Activated B cell treated with CpG ODN at 0.5 μM for 24 hours (primary cell): ENCODE measurements at regions of chr12 and their contacts with region 1.

Region 1: GRCh38 chr12:71746983-71747611 is 7.6 kb upstream of the RAB21 start:
- DNase-seq: peak; percentile 23
- ATAC-seq: peak; percentile 98
- H3K4me3 Mint-ChIP-seq: no peak overlapping the region
- H3K27ac Mint-ChIP-seq: no peak overlapping the region
- H3K4me1 Mint-ChIP-seq: peaks cover 3% of the 10 kb centered on the region
- H3K27me3 Mint-ChIP-seq: peaks cover 5% of the 10 kb centered on the region
- CTCF ChIP-seq: peak; percentile 91

Region 2: GRCh38 chr12:70443062-70443673 is 1303.9 kb before region 1 on chr12:
- CTCF ChIA-PET with region 1: no interaction called
- POLR2A ChIA-PET with region 1: no interaction called
- intact Hi-C with region 1: no loop called
- DNase-seq: no peak
- ATAC-seq: no peak
- H3K4me3 Mint-ChIP-seq: no peak overlapping the region
- H3K27ac Mint-ChIP-seq: no peak overlapping the region
- H3K4me1 Mint-ChIP-seq: no peaks in the 10 kb centered on the region
- H3K27me3 Mint-ChIP-seq: no peaks in the 10 kb centered on the region
- CTCF ChIP-seq: no peak

Region 3: DNA sequence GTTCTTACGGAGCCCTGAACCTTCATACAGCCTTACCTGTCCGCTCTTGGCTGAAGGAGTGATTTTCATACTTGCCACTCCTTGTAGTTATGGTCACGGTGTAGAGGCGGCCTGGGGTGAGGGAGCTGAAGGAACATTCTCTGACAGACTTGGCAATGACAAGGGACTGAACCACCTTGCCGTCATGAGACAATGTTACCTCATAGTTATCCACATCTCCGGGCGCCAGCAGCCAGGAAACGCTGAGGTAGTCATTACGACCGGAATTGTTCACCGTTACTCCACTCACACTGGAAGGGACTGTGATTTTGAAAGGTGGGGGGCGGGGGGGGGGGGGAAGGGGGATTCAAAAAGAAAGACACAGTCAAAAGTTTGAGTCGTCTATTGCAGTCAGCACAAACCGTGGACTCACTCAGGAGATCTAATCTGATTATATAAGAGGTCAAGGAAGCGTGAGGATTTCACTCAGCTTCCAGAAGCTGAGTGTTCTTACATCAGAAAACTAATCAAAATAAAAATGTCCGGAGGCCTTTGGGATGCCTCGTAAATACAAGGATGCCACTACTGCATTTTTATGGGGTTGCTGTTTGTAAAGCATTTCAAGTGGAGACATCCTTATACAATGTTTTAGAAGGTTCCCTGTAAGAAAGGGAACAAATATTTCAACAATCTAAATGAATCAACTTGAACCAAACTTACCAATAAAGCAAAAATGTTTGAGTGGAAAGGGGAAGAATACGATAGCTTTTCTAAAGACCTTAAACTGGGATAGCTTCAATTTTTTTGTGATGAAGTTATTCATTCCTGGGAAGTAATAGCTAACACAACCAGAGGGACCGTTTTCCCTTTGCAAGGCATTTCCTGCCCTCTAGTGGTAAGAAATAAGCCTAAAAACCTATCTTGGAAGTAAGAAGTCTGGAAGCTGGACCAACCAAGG is 1170.5 kb before region 1 on chr12:
- CTCF ChIA-PET with region 1: no interaction called
- POLR2A ChIA-PET with region 1: no interaction called
- intact Hi-C with region 1: loop called (anchors 10 kb)
- DNase-seq: no peak
- ATAC-seq: no peak
- H3K4me3 Mint-ChIP-seq: no peak overlapping the region
- H3K27ac Mint-ChIP-seq: no peak overlapping the region
- H3K4me1 Mint-ChIP-seq: no peaks in the 10 kb centered on the region
- H3K27me3 Mint-ChIP-seq: peaks cover 2% of the 10 kb centered on the region
- CTCF ChIP-seq: no peak

Region 4: DNA sequence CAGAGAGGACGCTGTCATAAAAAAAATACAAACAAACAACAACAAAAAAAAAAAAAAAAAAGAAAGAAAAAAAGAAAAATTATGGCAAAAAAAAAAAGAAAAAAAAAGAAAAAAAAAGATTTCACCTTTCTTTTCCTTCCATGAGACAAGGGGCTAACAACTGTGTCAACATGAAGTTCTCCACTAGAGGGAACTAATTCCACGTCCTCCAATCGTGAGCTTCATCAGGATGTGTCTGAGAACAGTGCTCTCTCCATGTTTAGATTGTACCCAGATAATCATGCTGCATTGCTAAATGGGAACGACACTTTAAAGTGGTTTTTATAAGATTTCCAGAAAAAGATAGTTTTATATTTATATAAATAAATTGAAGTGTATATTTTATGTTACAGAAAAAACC is 1013.7 kb before region 1 on chr12:
- CTCF ChIA-PET with region 1: interaction called, 5 read pairs
- POLR2A ChIA-PET with region 1: no interaction called
- intact Hi-C with region 1: loop called (anchors 2 kb)
- DNase-seq: no peak
- ATAC-seq: no peak
- H3K4me3 Mint-ChIP-seq: no peak overlapping the region
- H3K27ac Mint-ChIP-seq: no peak overlapping the region
- H3K4me1 Mint-ChIP-seq: no peaks in the 10 kb centered on the region
- H3K27me3 Mint-ChIP-seq: no peaks in the 10 kb centered on the region
- CTCF ChIP-seq: no peak

Region 5: GRCh38 chr12:71415336-71416231 is 331.5 kb before region 1 on chr12:
- CTCF ChIA-PET with region 1: interaction called, 62 read pairs
- POLR2A ChIA-PET with region 1: no interaction called
- intact Hi-C with region 1: loop called (anchors 1 kb)
- DNase-seq: no peak
- ATAC-seq: peak; percentile 54
- H3K4me3 Mint-ChIP-seq: no peak overlapping the region
- H3K27ac Mint-ChIP-seq: no peak overlapping the region
- H3K4me1 Mint-ChIP-seq: no peaks in the 10 kb centered on the region
- H3K27me3 Mint-ChIP-seq: no peaks in the 10 kb centered on the region
- CTCF ChIP-seq: no peak

Region 6: DNA sequence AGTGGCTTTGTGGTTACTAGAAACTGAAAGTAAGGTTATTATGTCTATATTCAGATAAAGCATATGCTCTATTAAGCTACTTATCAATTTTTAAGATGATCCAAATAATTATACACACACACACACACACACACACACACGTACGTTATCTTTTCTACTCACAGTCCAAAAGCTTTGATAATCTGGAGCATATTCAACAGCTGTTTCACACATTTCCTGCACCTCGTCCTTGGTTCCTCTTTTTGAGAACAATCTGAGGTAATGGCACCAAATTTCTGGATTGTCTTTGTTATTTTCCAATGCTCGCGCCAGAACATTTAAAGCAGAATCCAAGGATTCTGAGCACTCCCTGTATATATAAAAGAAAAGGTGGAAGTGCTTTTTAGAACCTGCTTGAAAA is 121.0 kb before region 1 on chr12:
- CTCF ChIA-PET with region 1: interaction called, 132 read pairs
- POLR2A ChIA-PET with region 1: interaction called, 6 read pairs
- intact Hi-C with region 1: no loop called
- DNase-seq: no peak
- ATAC-seq: peak; percentile 58
- H3K4me3 Mint-ChIP-seq: no peak overlapping the region
- H3K27ac Mint-ChIP-seq: peak overlapping the region; percentile 67
- H3K4me1 Mint-ChIP-seq: peaks cover 21% of the 10 kb centered on the region
- H3K27me3 Mint-ChIP-seq: no peaks in the 10 kb centered on the region
- CTCF ChIP-seq: no peak

Region 7: DNA sequence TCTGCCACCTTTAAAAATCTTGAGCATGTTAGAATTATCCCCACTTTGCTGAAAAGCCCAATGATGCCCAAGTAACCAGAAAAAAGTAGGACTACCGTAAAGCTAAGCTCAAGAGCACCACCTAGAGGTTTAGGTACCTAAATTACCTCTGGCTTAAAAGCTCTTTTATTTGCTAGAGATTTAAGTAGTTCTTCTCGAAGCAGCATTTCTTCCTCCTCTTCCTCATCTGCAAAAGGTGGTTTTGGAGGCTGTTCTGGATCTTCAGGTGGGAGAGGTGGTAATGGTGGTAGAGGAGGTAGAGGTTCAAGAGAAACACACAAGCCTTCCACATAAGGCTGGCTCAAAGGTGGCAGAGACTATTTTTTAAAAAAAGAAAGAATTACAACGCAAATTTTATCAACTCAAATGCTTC is 110.4 kb before region 1 on chr12:
- CTCF ChIA-PET with region 1: interaction called, 132 read pairs
- POLR2A ChIA-PET with region 1: interaction called, 3 read pairs
- intact Hi-C with region 1: loop called (anchors 1 kb)
- DNase-seq: no peak
- ATAC-seq: peak; percentile 57
- H3K4me3 Mint-ChIP-seq: no peak overlapping the region
- H3K27ac Mint-ChIP-seq: peak overlapping the region; percentile 19
- H3K4me1 Mint-ChIP-seq: peaks cover 5% of the 10 kb centered on the region
- H3K27me3 Mint-ChIP-seq: no peaks in the 10 kb centered on the region
- CTCF ChIP-seq: peak; percentile 66

Region 8: DNA sequence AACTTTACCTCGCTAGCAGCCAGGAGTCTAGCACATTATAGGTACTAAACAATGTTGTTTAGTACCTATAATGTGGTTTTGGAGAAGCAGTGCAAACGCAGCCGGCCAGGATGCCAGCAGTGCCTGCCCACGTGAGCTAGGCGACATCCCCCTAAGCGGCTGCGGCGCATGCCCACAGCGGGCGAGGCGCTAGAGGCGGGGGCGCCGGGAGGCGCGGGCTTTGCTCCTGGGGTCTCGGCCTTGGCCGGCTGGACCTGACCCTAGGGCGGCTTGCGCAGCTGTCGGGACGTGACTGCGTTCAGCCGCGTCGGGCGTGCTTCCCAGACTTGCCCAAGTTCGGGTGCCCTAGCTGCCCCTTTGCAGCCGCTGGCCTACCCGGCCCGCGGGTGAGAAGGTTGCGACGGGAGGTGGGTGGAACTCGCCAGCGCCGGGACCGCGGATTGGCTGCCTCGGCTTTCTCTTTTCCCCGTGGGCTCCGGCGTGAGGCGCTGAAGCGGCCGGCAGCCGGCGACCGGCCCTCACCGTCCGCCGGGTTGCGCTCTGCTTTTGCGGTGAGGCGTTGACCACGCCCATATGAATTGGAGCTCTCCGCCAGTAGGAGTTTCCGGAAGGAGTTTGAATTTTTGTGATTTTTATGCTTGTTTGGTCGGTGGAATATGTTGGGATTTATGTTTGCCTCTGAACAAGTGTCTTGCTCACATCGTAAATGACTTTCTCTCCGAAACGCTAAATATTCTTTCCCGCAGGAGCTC is 61.0 kb before region 1 on chr12 and contains the start of gene TMEM19:
- CTCF ChIA-PET with region 1: interaction called, 81 read pairs
- POLR2A ChIA-PET with region 1: interaction called, 22 read pairs
- intact Hi-C with region 1: loop called (anchors 1 kb)
- DNase-seq: peak; percentile 87
- ATAC-seq: peak; percentile 87
- H3K4me3 Mint-ChIP-seq: peak within 1 kb of the TSS; percentile 93
- H3K27ac Mint-ChIP-seq: peak within 1 kb of the TSS; percentile 97
- H3K4me1 Mint-ChIP-seq: peaks cover 56% of the 10 kb centered on the region
- H3K27me3 Mint-ChIP-seq: no peaks in the 10 kb centered on the region
- CTCF ChIP-seq: no peak
- total RNA-seq, gene TMEM19: 42.6 and 46.7 TPM in 2 replicates